ENCODE measurements at regions of chr13 and their contacts with region 1.

Region 1: DNA sequence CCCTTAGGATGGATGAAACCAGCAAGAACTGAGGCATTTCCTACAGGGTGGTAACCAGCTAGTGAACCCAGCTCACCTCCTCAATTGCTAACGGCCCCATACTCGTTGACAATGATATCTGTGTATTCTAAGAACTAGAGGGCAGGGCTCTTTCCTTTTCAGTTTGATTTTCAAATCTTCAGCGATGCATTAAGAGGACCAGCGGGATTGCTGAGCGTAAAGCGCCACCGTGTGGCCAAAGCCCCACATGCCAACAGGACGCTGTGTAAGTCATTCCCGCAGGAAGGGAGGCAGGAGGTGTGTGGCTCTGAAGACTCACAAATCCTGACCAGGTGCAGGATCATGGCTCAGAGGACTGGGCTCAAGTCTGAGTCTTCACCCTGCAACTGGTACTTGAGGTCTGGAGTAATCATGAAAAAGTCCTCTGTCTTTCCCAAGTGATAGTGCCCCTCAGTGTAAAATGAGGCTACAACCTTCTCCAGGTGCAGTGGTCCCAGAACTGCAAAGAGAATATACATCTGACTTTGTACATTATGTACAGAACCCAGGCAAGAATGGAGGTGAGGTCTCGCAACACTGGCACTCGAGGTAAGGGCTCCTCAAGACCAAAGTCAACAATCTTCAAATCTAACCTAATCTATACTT is 40.9 kb downstream of the C13orf42 start:
- DNase-seq: peak; percentile 66 to 87 (median 77)
- ATAC-seq: peak; percentile 74 to 87 (median 82)
- H3K4me3 ChIP-seq: no peak overlapping the region
- H3K27ac ChIP-seq: no peak overlapping the region
- H3K4me1 ChIP-seq: peaks cover 0 to 30% (median 8%) of the 10 kb centered on the region in 12 donors
- H3K27me3 ChIP-seq: peaks cover 0 to 1% (median 0%) of the 10 kb centered on the region in 9 donors
- CTCF ChIP-seq: peak; percentile 84 to 97 (median 93)
- POLR2A ChIP-seq: no peak

Region 2: GRCh38 chr13:49669735-49670309 is 1400.3 kb before region 1 on chr13:
- intact Hi-C with region 1: loop called in 1 of 10 experiments (anchors 5 kb)
- DNase-seq: peak in 4 of 5 donors; percentile 36 to 53 (median 48)
- ATAC-seq: peak; percentile 89 to 96 (median 93)
- H3K4me3 ChIP-seq: no peak overlapping the region
- H3K27ac ChIP-seq: no peak overlapping the region
- H3K4me1 ChIP-seq: peaks cover 0 to 9% (median 0%) of the 10 kb centered on the region in 12 donors
- H3K27me3 ChIP-seq: no peaks in the 10 kb centered on the region
- CTCF ChIP-seq: peak; percentile 55 to 84 (median 65)
- POLR2A ChIP-seq: no peak

Region 3: GRCh38 chr13:49976314-49977258 is 1093.5 kb before region 1 on chr13:
- intact Hi-C with region 1: loop called in 8 of 10 experiments (anchors 5 to 10 kb)
- DNase-seq: peak; percentile 50 to 79 (median 66)
- ATAC-seq: peak in 3 of 4 donors; percentile 80 to 85 (median 81)
- H3K4me3 ChIP-seq: no peak overlapping the region
- H3K27ac ChIP-seq: no peak overlapping the region
- H3K4me1 ChIP-seq: peaks cover 0 to 5% (median 0%) of the 10 kb centered on the region in 12 donors
- H3K27me3 ChIP-seq: no peaks in the 10 kb centered on the region
- CTCF ChIP-seq: peak; percentile 59 to 92 (median 89)
- POLR2A ChIP-seq: no peak

Region 4: GRCh38 chr13:50081679-50082425 is 988.3 kb before region 1 on chr13:
- intact Hi-C with region 1: loop called in 1 of 10 experiments (anchors 10 kb)
- DNase-seq: peak; percentile 97 to 98 (median 98)
- ATAC-seq: peak; percentile 95 to 97 (median 96)
- H3K4me3 ChIP-seq: peak overlapping the region; percentile 41 to 80 (median 69)
- H3K27ac ChIP-seq: peak overlapping the region in 11 of 12 donors; percentile 67 to 88 (median 78)
- H3K4me1 ChIP-seq: peaks cover 0 to 64% (median 26%) of the 10 kb centered on the region in 12 donors
- H3K27me3 ChIP-seq: no peaks in the 10 kb centered on the region
- CTCF ChIP-seq: peak in 2 of 12 donors; percentile 14 to 21
- POLR2A ChIP-seq: no peak

Region 5: GRCh38 chr13:50882816-50883435 is 187.2 kb before region 1 on chr13:
- intact Hi-C with region 1: no loop called
- DNase-seq: no peak
- ATAC-seq: no peak
- H3K4me3 ChIP-seq: no peak overlapping the region
- H3K27ac ChIP-seq: no peak overlapping the region
- H3K4me1 ChIP-seq: no peaks in the 10 kb centered on the region
- H3K27me3 ChIP-seq: no peaks in the 10 kb centered on the region
- CTCF ChIP-seq: no peak
- POLR2A ChIP-seq: no peak

Region 6: DNA sequence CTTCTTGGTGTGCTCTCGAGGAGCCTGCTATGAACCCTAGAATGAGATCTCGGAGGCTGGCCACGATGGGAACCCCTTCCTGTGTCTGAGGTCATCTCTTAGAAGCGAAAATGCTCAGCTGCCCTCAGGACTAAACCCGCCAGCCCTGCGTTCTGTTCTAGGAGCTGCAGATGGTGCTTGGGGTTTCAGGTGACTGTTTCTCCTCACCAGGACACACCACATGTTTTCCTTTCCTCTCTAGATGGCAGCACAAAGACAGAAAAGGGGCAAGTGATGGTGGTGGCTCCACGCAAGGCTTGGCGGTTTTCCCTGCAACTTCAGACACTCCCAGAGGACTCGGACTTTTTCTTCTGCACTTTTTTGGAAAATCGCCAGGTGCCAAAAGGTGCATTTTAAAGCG is 100.4 kb before region 1 on chr13:
- intact Hi-C with region 1: loop called in 3 of 10 experiments (anchors 5 to 10 kb)
- DNase-seq: no peak
- ATAC-seq: peak in 1 of 4 donors; percentile 23
- H3K4me3 ChIP-seq: no peak overlapping the region
- H3K27ac ChIP-seq: no peak overlapping the region
- H3K4me1 ChIP-seq: peaks cover 0 to 4% (median 0%) of the 10 kb centered on the region in 12 donors
- H3K27me3 ChIP-seq: no peaks in the 10 kb centered on the region
- CTCF ChIP-seq: peak in 3 of 12 donors; percentile 12 to 24 (median 19)
- POLR2A ChIP-seq: no peak

Region 7: DNA sequence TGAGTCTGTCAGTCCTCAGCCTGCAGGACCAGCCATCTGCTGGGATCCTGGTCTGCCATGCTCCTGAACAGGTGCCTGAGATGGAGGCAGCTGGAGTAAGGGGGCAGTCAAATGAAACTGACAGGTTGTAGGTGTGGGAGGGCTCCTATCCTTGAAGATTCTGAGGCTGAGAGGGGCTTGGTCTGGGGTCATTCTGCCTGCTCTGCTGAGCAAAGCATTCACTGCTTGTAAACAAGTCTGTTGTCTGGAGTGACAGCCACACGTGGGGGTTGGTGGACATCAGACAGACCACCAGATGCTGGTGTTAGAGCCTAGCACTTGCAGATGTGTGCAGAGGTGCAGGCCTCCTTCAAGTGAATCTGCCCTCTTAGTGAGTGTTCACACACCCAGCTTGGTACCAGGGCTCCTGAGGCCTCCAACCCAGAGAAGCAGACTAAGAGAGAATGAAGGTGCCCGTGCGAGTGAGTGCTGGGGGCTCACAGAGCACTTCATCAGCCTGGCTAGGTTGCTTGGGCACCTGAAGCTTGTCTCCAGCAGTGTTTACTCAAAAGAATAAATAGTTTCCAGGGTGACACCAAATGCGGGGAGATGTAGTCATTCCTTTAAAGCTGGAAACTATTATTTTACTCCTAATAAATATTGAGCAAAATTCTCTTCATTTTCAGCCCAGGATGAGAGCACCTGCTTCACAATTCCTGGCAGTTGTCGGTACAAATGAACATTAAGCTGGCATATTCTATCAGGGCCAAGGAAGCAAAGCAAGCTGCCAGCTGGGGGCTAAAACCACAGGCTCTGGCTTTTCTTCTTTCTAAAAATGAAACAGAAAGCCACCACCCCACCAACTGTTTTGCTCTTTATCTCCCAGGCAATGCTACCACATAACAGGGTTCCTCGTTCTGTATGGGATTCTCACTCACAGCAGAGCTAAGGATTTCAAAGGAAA is 78.3 kb before region 1 on chr13:
- intact Hi-C with region 1: loop called in 2 of 10 experiments (anchors 5 kb)
- DNase-seq: no peak
- ATAC-seq: peak in 2 of 4 donors; percentile 11 to 29
- H3K4me3 ChIP-seq: no peak overlapping the region
- H3K27ac ChIP-seq: peak overlapping the region in 3 of 12 donors; percentile 5 to 42 (median 22)
- H3K4me1 ChIP-seq: peaks cover 0 to 40% (median 16%) of the 10 kb centered on the region in 12 donors
- H3K27me3 ChIP-seq: no peaks in the 10 kb centered on the region
- CTCF ChIP-seq: no peak
- POLR2A ChIP-seq: no peak

Region 8: DNA sequence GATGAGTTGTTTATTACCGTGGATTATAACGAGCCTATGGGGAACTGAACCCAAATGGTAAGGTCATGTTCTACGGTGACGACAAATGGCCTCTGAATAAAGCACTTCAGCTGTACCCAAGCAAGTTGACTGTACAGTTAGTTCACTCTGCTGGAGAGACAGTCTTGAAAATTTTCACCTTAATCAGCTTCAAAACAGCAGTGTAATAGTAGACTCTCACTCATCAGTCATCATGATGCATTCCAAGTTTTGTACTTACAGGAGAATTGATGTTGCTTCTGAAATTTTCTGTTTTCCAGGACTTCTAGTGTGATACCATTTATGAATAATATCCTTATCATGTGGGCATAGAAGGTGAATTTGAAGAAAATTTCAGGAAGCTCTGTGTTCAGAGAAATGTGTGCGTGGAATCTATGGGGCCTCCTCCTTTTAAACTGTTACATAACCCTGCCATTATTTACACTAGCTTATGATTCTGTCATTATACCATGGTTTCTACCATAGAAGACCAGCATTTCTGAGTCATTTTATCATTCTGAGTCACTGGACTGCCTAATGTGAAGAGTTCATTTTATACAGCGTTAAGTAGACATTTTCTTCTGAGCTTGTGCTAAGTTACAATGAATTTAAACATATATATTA is 611.0 kb after region 1 on chr13:
- intact Hi-C with region 1: no loop called
- DNase-seq: no peak
- ATAC-seq: no peak
- H3K4me3 ChIP-seq: no peak overlapping the region
- H3K27ac ChIP-seq: no peak overlapping the region
- H3K4me1 ChIP-seq: peaks cover 0 to 8% (median 0%) of the 10 kb centered on the region in 12 donors
- H3K27me3 ChIP-seq: no peaks in the 10 kb centered on the region
- CTCF ChIP-seq: no peak
- POLR2A ChIP-seq: no peak

Measured in heart left ventricle (tissue), 16 donors.